Activated CD8-positive, alpha-beta T cell treated with anti-CD3 and anti-CD28 coated beads for 36 hours (primary cell): ENCODE measurements at regions of chr2 and their contacts with region 1.

Region 1: DNA sequence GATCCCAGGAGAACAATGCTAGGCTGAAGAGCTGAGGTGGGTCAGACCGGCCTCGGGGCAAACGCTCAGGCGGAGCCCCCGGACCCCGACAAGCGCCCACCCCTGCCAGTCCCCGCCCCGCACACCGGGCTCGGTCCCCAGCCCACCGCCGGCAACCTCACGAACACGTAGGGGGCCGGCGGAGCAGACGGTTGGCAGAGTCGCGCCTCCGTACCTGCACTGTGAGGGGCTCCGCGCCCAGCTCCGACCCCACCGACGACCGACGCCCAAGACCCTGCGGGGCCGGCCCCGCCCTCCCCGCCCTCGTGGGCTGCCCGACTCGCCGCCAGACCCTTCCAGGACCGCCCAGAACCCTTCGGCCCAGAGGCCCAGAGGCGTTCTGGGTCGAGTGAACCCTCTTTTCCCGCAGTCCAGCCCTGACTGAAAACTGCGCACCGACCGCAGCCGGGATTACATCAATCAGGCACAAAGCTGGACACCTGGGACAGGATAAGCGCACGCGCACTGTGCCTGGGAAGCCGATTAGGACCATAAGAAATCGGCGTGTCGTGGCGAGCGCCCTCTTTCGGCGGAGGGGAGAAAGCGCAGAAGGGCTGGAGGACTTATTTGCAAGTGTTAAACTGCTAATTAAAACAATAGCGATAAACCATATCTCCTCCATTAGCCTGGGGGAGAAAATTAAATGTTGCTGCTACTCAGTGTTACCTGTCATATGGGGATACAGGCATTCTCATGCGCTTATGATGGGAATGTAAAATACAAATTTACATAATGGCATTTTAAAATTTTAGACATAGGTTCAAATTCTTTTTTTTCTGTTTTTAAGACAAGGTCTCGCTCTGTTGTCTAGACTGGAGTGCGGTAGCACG is 11.7 kb upstream of the DCTN1 start:
- DNase-seq: peak; percentile 95
- ATAC-seq: peak; percentile 92
- H3K4me3 Mint-ChIP-seq: peak overlapping the region; percentile 86
- H3K27ac Mint-ChIP-seq: peak overlapping the region; percentile 99
- H3K4me1 Mint-ChIP-seq: peaks cover 2% of the 10 kb centered on the region
- H3K27me3 Mint-ChIP-seq: no peaks in the 10 kb centered on the region
- CTCF ChIP-seq: peak; percentile 96

Region 2: GRCh38 chr2:73892631-73893329 is 499.0 kb before region 1 on chr2 and contains the start of gene ACTG2:
- CTCF ChIA-PET with region 1: no interaction called
- POLR2A ChIA-PET with region 1: no interaction called
- intact Hi-C with region 1: no loop called
- DNase-seq: no peak
- ATAC-seq: no peak
- H3K4me3 Mint-ChIP-seq: no peak within 1 kb of the TSS
- H3K27ac Mint-ChIP-seq: no peak within 1 kb of the TSS
- H3K4me1 Mint-ChIP-seq: peaks cover 37% of the 10 kb centered on the region
- H3K27me3 Mint-ChIP-seq: no peaks in the 10 kb centered on the region
- CTCF ChIP-seq: no peak
- total RNA-seq, gene ACTG2: 0.11 to 0.27 TPM

Region 3: GRCh38 chr2:74379851-74380789 is 11.7 kb before region 1 on chr2 and contains the start of gene DCTN1:
- CTCF ChIA-PET with region 1: interaction called, 17 read pairs
- POLR2A ChIA-PET with region 1: interaction called, 3 read pairs
- intact Hi-C with region 1: no loop called
- DNase-seq: peak; percentile 46
- ATAC-seq: peak; percentile 80
- H3K4me3 Mint-ChIP-seq: no peak within 1 kb of the TSS
- H3K27ac Mint-ChIP-seq: peak within 1 kb of the TSS; percentile 40
- H3K4me1 Mint-ChIP-seq: peaks cover 29% of the 10 kb centered on the region
- H3K27me3 Mint-ChIP-seq: no peaks in the 10 kb centered on the region
- CTCF ChIP-seq: no peak
- total RNA-seq, gene DCTN1: 67.3 to 81.4 TPM

Region 4: DNA sequence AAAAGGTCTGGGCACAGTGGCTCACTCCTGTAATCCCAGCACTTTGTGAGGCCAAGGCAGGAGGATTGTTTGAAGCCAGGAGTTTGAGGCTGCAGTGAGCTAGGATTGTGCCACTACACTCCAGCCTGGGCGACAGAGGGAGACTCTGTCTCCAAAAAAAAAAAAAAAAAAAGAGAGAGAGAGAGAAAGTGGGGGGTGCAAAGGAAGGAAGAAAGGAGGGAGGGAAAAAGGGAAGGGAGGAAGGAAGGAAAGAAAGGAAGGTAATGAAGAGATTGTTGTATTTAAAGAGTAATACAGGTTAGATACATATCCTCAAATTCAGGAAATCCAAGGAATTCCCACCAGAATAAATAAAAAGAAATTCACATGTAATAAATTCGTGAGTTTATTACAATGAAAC is 10.1 kb after region 1 on chr2:
- CTCF ChIA-PET with region 1: interaction called, 14 read pairs
- POLR2A ChIA-PET with region 1: interaction called, 3 read pairs
- intact Hi-C with region 1: no loop called
- DNase-seq: no peak
- ATAC-seq: no peak
- H3K4me3 Mint-ChIP-seq: no peak overlapping the region
- H3K27ac Mint-ChIP-seq: no peak overlapping the region
- H3K4me1 Mint-ChIP-seq: peaks cover 2% of the 10 kb centered on the region
- H3K27me3 Mint-ChIP-seq: peaks cover 5% of the 10 kb centered on the region
- CTCF ChIP-seq: no peak

Region 5: GRCh38 chr2:74447230-74447999 is 55.6 kb after region 1 on chr2:
- CTCF ChIA-PET with region 1: no interaction called
- POLR2A ChIA-PET with region 1: no interaction called
- intact Hi-C with region 1: no loop called
- DNase-seq: no peak
- ATAC-seq: no peak
- H3K4me3 Mint-ChIP-seq: no peak overlapping the region
- H3K27ac Mint-ChIP-seq: no peak overlapping the region
- H3K4me1 Mint-ChIP-seq: peaks cover under 1% of the 10 kb centered on the region
- H3K27me3 Mint-ChIP-seq: peaks cover 11% of the 10 kb centered on the region
- CTCF ChIP-seq: no peak

Region 6: DNA sequence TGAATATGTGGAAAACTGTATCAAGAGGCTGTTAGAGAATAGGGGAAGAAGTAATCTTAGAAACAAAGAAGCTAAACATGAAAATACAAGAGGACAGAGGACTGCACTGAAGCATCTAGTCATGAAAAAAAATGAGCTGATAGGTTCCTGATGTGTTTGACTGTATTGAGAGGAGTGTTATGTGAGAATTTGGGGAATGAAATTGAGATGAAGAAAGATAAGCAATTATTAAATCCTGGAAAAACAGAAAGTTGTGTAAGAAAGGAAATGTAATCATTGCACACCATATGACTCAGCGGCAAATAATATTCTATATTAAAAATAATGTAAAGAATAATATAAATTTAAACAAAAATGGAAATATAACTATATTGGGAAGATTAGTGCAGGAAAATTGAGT is 333.5 kb after region 1 on chr2:
- CTCF ChIA-PET with region 1: no interaction called
- POLR2A ChIA-PET with region 1: no interaction called
- intact Hi-C with region 1: no loop called
- DNase-seq: no peak
- ATAC-seq: no peak
- H3K4me3 Mint-ChIP-seq: no peak overlapping the region
- H3K27ac Mint-ChIP-seq: no peak overlapping the region
- H3K4me1 Mint-ChIP-seq: no peaks in the 10 kb centered on the region
- H3K27me3 Mint-ChIP-seq: peaks cover 7% of the 10 kb centered on the region
- CTCF ChIP-seq: no peak